Activated CD4-positive, alpha-beta T cell treated with anti-CD3 and anti-CD28 coated beads, Interleukin-2, amount 10 ng/mL, durations not matched to agents 24 days and 14 days (primary cell): ENCODE measurements at regions of chr1 and their contacts with region 1.

Region 1: DNA sequence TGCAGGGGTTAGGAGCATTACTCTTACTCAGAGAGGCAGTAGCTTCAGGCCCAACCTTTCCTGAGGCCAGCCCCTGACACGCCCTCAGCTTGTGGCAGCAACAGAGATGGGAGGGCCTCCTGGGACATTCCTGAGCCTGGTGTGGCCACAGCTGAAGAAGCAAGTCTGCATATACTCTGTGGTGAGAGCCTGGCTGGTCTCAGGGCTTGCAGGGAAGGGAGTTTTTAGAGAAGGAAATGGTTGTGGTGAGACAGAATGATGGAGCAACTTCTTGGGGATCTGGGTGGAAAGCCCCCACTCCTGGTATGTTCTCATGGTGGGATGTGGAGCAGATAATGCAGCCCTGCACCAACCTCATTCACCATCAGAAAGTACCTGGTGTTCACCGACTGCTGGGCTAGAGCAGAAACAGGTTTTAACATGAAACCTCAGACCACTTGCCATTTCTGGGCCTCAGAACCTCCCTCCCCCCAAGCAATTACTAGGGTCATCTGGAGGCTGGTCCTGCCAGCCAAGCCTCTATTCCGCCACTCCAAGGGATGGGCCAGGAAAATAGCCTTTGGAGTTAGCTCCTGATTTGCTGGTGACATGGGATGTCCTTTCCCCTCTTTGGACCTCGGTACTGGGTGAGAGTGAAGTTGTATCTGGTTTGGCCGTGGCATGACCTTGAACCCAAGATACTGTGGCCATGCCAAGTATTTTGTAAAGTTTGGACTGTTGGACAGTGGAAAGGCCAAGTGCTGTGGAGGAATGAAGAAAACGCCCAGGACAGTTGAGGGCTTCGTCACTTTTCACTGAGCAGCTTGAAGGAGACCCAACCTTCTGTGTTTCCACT is 28.1 kb upstream of the RNF19B start:
- DNase-seq: peak; percentile 92
- H3K4me3 Mint-ChIP-seq: peak overlapping the region; percentile 68
- H3K27ac Mint-ChIP-seq: peak overlapping the region; percentile 82
- H3K4me1 Mint-ChIP-seq: peaks cover 68% of the 10 kb centered on the region
- H3K27me3 Mint-ChIP-seq: no peaks in the 10 kb centered on the region

Region 2: DNA sequence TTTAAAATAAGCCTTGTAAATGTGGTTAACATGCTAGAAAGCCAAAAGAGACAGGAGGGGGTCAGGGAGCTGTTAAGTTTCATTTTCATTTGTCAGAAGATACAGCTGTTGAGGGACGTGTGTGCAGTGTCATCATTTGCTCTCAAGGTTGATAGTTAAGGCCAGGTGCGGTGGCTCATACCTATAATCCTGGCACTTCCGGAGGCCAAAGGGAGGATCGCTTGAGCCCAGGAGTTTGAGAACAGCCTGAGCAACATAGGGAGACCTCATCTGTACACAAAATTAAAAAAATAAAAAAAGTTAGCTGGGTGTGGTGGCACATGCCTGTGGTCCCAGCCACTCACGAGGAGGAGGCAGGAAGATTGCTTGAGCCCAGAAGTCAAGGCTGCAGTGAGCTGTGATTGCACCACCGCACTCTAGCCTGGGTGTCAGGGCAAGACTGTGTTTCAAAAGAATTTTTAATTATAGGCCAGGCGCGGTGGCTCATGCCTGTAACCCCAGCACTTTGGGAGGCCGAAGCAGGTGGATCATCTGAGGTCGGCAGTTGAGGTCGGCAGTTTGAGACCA is 365.0 kb before region 1 on chr1:
- intact Hi-C with region 1: no loop called
- DNase-seq: peak; percentile 76
- H3K4me3 Mint-ChIP-seq: peak overlapping the region; percentile 60
- H3K27ac Mint-ChIP-seq: peak overlapping the region; percentile 60
- H3K4me1 Mint-ChIP-seq: peaks cover 27% of the 10 kb centered on the region
- H3K27me3 Mint-ChIP-seq: no peaks in the 10 kb centered on the region

Region 3: DNA sequence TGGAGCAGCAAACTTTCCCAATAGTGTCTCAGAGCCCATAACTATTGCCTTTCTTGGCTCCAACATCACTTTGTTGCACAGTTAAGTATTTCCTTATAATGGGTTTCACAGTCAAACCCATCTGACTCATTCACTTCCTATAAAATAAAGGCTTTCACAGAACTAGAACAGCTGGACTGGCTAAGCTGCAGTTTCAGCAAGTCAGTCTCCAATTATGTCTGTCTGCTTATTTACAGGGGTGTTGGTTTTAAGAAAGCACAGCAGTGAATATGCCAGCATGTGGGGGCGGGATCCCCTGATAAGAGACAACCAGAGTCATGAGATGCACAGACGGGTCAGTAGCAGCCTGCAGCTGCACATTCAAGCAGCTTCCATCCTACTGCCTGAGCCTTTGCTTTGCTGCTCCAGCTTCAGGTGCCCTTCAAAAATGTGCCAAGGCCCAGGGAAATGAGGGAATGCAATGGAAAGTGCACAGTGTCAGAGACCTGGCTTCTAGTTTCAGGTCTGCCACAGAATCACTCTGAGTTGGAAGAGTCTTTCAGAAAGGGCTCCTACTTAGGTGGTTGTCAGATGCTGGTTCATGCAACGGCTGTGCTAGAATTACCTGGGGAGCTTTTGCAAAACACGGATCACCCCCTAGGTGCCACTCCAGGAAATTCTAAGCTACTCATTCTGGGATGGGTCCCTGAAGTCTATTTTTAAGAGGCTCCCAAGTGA is 52.9 kb before region 1 on chr1:
- intact Hi-C with region 1: loop called (anchors 2 kb)
- DNase-seq: no peak
- H3K4me3 Mint-ChIP-seq: no peak overlapping the region
- H3K27ac Mint-ChIP-seq: peak overlapping the region; percentile 49
- H3K4me1 Mint-ChIP-seq: peaks cover 41% of the 10 kb centered on the region
- H3K27me3 Mint-ChIP-seq: no peaks in the 10 kb centered on the region

Region 4: DNA sequence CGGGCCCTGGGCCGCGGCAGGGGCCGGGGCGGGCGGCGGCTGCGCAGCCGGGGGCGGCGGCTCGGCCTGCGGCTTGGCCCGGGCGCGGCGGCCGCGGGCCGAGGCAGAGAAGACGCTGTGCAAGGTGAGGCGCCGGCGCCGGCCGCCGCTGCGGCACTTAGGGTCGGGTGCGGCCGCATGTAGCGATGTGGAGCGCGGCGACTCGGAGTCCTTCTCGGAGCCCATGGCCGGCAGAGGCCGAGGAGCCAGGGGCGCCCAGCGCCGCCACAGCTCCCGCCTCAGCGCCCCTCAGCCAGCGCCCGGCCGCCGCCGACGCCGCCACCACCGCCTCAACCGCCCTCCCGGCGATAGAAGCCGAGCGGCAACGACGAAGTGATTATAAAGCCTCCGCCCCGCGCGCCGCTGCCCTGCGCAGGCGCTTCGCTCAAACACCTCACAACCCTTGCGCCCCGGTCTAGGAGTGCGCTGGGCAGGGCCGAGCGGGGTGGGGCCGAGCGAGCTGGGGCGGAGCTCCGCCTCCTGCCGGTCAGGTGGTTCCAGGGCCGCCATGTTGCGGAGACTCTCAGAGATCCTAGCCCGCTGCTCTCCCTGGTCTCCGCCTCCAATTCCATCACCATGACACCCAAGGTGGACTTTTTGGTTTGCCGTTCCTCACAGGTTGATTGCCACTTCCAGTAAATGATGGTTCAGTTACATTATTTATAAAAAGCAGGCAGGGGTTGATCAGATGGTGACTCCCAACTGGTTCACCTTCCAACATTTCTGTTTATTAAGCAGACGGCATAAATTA is 28.1 kb before region 1 on chr1 and contains the start of gene RNF19B:
- intact Hi-C with region 1: loop called (anchors 2 kb)
- DNase-seq: peak; percentile 99
- H3K4me3 Mint-ChIP-seq: peak within 1 kb of the TSS; percentile 87
- H3K27ac Mint-ChIP-seq: peak within 1 kb of the TSS; percentile 87
- H3K4me1 Mint-ChIP-seq: peaks cover 57% of the 10 kb centered on the region
- H3K27me3 Mint-ChIP-seq: no peaks in the 10 kb centered on the region
- total RNA-seq, gene RNF19B: 44.5 and 46.8 TPM in 2 replicates

Region 5: GRCh38 chr1:32981003-32981901 is 11.5 kb before region 1 on chr1:
- intact Hi-C with region 1: loop called (anchors 1 kb)
- DNase-seq: peak; percentile 91
- H3K4me3 Mint-ChIP-seq: peak overlapping the region; percentile 78
- H3K27ac Mint-ChIP-seq: peak overlapping the region; percentile 89
- H3K4me1 Mint-ChIP-seq: peaks cover 62% of the 10 kb centered on the region
- H3K27me3 Mint-ChIP-seq: no peaks in the 10 kb centered on the region

Region 6: DNA sequence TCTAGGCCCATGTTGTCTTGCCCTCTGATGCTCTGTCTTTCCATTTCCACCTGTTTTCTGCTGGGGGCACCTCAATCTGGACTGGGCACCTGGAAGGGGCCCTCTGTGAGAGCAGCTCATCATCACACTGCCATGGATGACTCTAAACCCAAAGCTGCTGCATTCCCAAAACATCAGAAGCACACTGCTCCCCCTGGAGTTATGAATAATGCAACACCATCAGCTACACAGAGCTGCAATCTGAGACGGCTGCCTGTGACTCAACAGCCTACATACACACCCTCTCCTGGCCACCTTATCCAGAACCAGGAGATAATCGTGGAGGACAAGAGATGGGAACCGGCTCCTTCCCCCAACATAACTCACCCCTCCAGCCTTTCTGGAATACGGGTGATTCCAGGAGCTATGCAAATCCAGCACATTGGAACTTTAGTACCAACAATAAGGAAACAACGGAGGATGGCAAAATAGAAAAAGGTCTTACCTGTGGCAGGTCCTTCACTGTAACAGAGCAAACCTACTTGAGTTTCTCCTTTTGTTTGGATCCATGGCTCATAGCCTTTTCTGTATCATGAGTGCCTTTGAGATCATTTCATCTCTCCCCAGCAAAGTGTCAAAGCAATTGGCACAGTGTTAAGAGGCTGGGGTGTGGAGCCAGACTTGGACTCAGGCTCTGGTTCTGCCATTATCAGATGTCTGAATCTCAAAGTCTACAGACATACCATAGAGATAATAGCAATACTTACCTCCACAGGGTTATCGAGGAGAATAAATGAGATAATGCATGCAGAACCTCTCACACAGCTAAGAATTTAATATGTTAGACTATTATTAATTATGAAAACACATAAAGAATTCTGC is 14.7 kb after region 1 on chr1:
- intact Hi-C with region 1: loop called (anchors 2 kb)
- DNase-seq: peak; percentile 72
- H3K4me3 Mint-ChIP-seq: no peak overlapping the region
- H3K27ac Mint-ChIP-seq: peak overlapping the region; percentile 31
- H3K4me1 Mint-ChIP-seq: peaks cover 30% of the 10 kb centered on the region
- H3K27me3 Mint-ChIP-seq: no peaks in the 10 kb centered on the region

Region 7: GRCh38 chr1:33022650-33023200 is 30.0 kb after region 1 on chr1:
- intact Hi-C with region 1: no loop called
- DNase-seq: no peak
- H3K4me3 Mint-ChIP-seq: no peak overlapping the region
- H3K27ac Mint-ChIP-seq: peak overlapping the region; percentile 55
- H3K4me1 Mint-ChIP-seq: peaks cover 43% of the 10 kb centered on the region
- H3K27me3 Mint-ChIP-seq: no peaks in the 10 kb centered on the region

Region 8: DNA sequence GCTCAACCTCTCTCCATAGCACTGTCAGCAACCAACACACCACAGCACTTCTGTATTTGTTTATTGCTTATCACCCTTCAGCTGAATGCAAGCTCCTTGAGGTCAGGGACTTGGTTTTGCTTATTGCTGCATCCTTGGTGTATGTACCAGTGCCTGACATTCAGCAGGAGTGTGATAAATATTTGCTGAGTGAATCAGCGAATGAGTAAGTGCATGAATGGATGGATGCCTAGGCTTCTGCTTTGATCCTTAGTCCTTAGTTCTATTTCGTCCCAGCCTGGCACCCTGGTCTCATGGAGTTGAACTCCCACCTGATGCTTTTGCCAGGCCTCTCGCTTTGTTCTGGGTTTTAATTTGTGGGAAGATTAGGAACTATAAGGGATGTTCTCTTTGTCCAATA is 568.0 kb after region 1 on chr1:
- intact Hi-C with region 1: no loop called
- DNase-seq: no peak
- H3K4me3 Mint-ChIP-seq: no peak overlapping the region
- H3K27ac Mint-ChIP-seq: no peak overlapping the region
- H3K4me1 Mint-ChIP-seq: no peaks in the 10 kb centered on the region
- H3K27me3 Mint-ChIP-seq: peaks cover 9% of the 10 kb centered on the region